ENCODE measurements at regions of chr9 and their contacts with region 1.

Region 1: DNA sequence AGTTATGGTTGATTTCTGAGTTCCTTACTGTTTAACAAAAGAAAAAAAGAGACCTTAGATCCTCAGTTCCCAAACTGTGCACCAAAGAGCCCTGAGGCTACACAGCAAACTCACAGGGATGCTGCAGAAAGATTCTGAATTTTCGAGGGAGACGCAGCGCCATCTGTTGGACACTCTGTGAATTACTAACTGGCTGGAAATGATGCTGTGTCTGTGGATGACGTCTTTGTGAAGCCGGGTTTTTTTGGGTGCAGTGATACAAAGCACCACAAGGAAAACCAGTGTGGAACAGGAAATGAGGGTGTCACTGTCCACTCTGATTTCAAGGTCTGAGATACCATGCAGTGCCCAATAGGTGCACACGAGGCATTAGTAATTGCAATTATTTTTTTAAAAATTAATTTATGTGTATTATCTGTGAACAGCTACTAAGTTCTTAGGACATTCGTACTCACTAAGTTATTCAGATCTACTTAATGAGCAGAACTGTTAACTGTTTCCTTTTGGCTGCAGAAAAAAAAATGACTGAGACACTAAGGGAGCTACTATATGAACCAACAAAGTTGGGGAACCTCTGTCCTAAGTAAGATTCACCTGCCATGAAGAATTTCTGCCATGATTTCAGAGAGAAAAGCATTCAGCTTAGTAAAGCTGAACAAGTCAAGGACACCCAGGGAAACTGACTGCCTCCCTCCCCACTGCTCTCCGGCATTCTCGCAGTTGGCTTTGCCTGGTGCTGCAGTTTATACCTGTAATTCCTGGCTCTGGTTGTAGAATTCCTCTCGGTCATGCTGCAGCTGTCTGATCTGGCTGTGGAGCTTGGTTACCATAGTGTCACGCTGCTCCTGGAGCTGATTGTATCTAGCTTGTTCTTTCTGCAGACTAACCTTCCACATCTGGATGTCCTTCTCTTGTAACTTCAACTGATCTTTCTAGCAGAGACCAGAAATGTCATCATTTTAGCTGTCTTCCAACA is 23.4 kb downstream of the SPACA9 start:
- DNase-seq: peak; percentile 82 to 94
- ATAC-seq: peak; percentile 98 to 99
- H3K4me3 ChIP-seq: no peak overlapping the region
- H3K27ac ChIP-seq: no peak overlapping the region
- H3K4me1 ChIP-seq: no peaks in the 10 kb centered on the region
- CTCF ChIP-seq: peak; percentile 82
- EP300 ChIP-seq: no peak
- POLR2A ChIP-seq: no peak
- RAD21 ChIP-seq: peak; percentile 57 to 59

Region 2: DNA sequence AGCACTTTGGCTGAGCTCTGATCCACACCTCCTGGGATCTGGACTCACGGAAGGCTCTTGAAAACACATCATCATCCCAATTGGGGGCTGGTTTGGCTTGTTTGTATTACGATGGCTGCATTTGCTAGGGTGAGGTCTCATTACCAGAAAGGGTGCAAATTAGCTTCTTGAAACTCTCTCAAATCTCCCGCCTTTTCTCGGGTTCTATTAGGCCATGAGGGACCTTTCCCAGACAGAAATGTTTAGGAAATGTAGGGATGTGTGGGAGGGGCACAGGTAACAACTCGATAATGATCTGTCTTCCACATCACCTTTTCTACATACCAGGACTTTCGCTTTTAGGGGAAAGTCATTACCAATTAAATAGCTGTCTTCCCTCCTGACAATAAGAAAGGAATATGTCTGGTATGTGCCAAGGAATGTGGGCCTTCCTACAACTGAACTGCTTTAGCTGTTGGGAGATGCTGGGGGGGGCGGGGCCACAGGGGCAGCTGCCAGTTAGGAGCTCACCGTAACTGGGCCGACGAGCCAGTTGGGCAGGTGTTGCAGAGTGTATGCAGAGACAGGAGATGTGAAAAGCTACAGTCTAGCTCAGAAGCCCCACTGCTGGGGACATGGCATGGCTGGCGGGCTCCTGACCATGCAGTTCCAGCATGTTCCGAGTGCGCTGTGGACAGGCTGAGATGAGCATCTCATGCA is 95.3 kb before region 1 on chr9:
- CTCF ChIA-PET with region 1: interaction called, 10 read pairs
- POLR2A ChIA-PET with region 1: no interaction called
- DNase-seq: no peak
- ATAC-seq: no peak
- H3K4me3 ChIP-seq: no peak overlapping the region
- H3K27ac ChIP-seq: no peak overlapping the region
- H3K4me1 ChIP-seq: no peaks in the 10 kb centered on the region
- CTCF ChIP-seq: no peak
- EP300 ChIP-seq: no peak
- POLR2A ChIP-seq: no peak
- RAD21 ChIP-seq: no peak

Region 3: GRCh38 chr9:132878695-132879456 is 23.3 kb before region 1 on chr9 and contains the start of gene SPACA9:
- CTCF ChIA-PET with region 1: interaction called, 145 read pairs
- POLR2A ChIA-PET with region 1: no interaction called
- DNase-seq: peak; percentile 63 to 78
- ATAC-seq: peak; percentile 62 to 82
- H3K4me3 ChIP-seq: peak within 1 kb of the TSS; percentile 97
- H3K27ac ChIP-seq: peak within 1 kb of the TSS; percentile 89 to 95
- H3K4me1 ChIP-seq: peaks cover 8% of the 10 kb centered on the region; the same call in 1 of the 3 replicates
- CTCF ChIP-seq: no peak
- EP300 ChIP-seq: no peak
- POLR2A ChIP-seq: no peak; the same call in 1 of the 2 replicates
- RAD21 ChIP-seq: no peak
- polyA plus RNA-seq, gene SPACA9: 3.1 and 4.1 TPM in 2 replicates

Region 4: DNA sequence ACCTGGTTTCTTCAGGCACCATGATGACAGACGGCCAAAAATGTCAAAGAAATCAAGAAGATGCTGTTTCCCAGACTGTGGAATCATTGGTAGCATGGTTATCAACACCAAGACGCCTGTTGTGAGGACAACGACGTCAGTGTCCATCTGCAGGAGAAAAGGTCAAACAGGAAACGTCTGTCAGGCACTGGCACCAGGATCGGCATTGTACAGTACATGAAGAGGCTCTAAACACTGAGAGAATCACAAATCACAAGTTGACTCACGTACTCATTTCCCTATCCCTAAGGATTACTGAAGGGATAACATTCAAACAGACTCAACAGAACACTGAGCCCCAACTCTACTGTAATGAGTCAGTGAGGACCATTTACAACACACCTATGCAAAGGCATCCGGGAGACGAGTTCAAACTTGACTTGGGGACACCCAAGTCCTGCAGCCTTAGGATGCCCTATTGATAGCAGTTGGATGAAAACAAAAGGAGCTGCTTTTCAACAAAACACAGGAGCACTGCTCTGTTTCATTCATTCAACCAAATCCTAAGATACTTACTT is 21.3 kb after region 1 on chr9:
- CTCF ChIA-PET with region 1: interaction called, 81 read pairs
- POLR2A ChIA-PET with region 1: no interaction called
- DNase-seq: no peak
- ATAC-seq: no peak
- H3K4me3 ChIP-seq: no peak overlapping the region
- H3K27ac ChIP-seq: no peak overlapping the region
- H3K4me1 ChIP-seq: no peaks in the 10 kb centered on the region
- CTCF ChIP-seq: no peak
- EP300 ChIP-seq: no peak
- POLR2A ChIP-seq: no peak
- RAD21 ChIP-seq: no peak

Region 5: GRCh38 chr9:132935026-132935425 is 32.9 kb after region 1 on chr9:
- CTCF ChIA-PET with region 1: interaction called, 17 read pairs
- POLR2A ChIA-PET with region 1: no interaction called
- DNase-seq: no peak
- ATAC-seq: no peak
- H3K4me3 ChIP-seq: no peak overlapping the region
- H3K27ac ChIP-seq: no peak overlapping the region
- H3K4me1 ChIP-seq: peaks cover 5% of the 10 kb centered on the region; the same call in 1 of the 3 replicates
- CTCF ChIP-seq: no peak
- EP300 ChIP-seq: no peak
- POLR2A ChIP-seq: no peak
- RAD21 ChIP-seq: no peak

Region 6: DNA sequence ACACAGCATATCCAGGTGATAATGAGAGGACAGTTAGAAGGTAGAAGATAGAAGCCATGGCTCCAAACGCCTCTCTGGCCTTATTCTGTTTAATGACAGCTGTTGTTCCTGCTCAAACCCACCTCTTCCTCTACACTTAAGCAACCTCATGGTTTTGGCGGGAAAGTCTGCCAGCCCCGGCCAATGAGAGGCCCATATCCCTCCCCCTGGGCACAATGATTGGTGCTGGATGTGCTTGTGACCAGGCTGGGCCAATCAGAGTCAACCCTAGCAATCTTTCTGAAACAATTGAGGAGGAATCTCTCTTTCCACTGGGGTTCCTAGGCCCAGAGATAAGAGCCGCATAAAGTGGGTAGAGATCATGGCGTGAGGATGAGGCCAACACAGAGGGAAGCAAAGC is 71.6 kb after region 1 on chr9:
- CTCF ChIA-PET with region 1: interaction called, 48 read pairs
- POLR2A ChIA-PET with region 1: no interaction called
- DNase-seq: peak; percentile 45 to 56
- ATAC-seq: peak in 1 of 2 experiments; percentile 43; a peak in 3 of 6 replicates
- H3K4me3 ChIP-seq: no peak overlapping the region
- H3K27ac ChIP-seq: no peak overlapping the region
- H3K4me1 ChIP-seq: peaks cover 8% of the 10 kb centered on the region; the same call in 1 of the 3 replicates
- CTCF ChIP-seq: no peak
- EP300 ChIP-seq: no peak
- POLR2A ChIP-seq: no peak
- RAD21 ChIP-seq: no peak